Heart right ventricle (tissue), 16 donors: ENCODE measurements at regions of chr6 and their contacts with region 1.

Region 1: DNA sequence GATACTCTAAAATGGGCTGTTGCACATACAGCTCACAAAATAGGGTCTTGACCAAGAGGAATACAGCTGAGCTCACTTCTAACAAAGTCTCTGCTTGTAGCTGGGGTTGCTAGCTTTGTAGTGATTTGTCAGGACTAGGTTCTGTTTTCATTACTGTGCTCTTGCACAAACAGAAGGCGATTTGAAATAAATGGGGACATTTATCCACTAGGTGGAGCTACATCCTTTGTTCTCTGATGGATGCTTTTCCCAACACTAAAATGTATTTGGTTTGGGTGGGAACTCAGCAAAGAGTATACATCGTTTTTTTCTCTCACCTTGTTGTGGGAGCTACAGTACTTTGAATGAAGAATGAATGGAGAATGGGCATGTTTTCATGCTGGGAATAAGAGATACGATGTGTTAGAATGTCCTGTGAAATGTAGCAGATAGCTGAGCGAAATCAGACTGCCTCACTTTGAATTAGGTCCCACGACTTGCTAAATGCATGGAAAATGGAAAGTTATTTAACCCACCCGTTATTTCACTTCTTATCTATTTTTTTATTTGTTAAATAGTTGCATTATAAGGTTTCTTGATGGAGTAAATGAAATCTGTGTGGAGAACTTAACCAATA is 494.7 kb upstream of the MAP3K7 start:
- DNase-seq: no peak
- ATAC-seq: peak in 2 of 8 donors; percentile 24 to 52
- H3K4me3 ChIP-seq: no peak overlapping the region
- H3K27ac ChIP-seq: no peak overlapping the region
- H3K4me1 ChIP-seq: no peaks in the 10 kb centered on the region
- H3K27me3 ChIP-seq: no peaks in the 10 kb centered on the region
- CTCF ChIP-seq: peak; percentile 42 to 77 (median 69)

Region 2: DNA sequence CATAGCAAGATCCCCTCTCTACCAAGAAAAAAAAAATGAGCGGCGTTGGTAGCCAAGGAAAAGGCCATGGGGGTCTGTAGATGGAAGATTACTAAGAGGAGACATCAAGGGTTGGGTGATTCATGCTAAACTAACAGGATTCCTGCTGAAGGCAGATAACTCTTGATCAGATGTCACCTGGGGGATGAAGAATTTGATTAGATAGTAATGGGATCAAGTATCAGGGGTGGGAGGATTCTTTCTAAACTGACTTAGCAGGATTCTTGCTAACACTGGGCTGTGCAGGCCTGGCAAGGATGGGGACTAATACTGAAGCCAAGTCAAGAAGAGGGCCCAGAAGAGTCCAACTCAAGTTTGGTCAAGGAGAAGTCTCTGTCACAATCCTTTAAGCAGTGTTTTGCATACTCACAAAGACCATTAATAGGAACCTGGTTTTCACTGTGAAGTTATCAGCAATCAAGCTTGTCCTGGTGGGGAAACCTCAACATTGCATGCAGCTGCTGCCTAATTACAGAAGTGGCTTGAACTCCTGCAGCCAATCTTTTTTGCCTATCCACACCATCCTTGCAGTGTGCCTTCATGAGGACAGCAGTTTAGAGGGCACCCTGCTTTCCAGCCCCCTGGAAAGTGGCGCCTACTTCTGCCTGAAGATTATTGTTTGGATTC is 1587.3 kb before region 1 on chr6:
- intact Hi-C with region 1: no loop called
- DNase-seq: no peak
- ATAC-seq: no peak
- H3K4me3 ChIP-seq: no peak overlapping the region
- H3K27ac ChIP-seq: no peak overlapping the region
- H3K4me1 ChIP-seq: peaks cover 0 to 8% (median 0%) of the 10 kb centered on the region in 9 donors
- H3K27me3 ChIP-seq: no peaks in the 10 kb centered on the region
- CTCF ChIP-seq: peak in 1 of 9 donors; percentile 7

Region 3: GRCh38 chr6:90940812-90941481 is 140.6 kb before region 1 on chr6:
- intact Hi-C with region 1: loop called in 1 of 10 experiments (anchors 5 kb)
- DNase-seq: no peak
- ATAC-seq: peak in 6 of 8 donors; percentile 38 to 71 (median 54)
- H3K4me3 ChIP-seq: peak overlapping the region in 1 of 10 donors; percentile 14
- H3K27ac ChIP-seq: peak overlapping the region in 1 of 10 donors; percentile 2
- H3K4me1 ChIP-seq: peaks cover 0 to 5% (median 0%) of the 10 kb centered on the region in 9 donors
- H3K27me3 ChIP-seq: no peaks in the 10 kb centered on the region
- CTCF ChIP-seq: peak; percentile 25 to 66 (median 55)